ENCODE measurements at regions of chr4 and their contacts with region 1.

Region 1: GRCh38 chr4:150023489-150023888 is 54.8 kb upstream of the DCLK2 start:
- DNase-seq: no peak
- H3K4me3 ChIP-seq: no peak overlapping the region
- H3K27ac ChIP-seq: no peak overlapping the region
- H3K4me1 ChIP-seq: no peaks in the 10 kb centered on the region
- H3K27me3 ChIP-seq: no peaks in the 10 kb centered on the region
- CTCF ChIP-seq: no peak

Region 2: DNA sequence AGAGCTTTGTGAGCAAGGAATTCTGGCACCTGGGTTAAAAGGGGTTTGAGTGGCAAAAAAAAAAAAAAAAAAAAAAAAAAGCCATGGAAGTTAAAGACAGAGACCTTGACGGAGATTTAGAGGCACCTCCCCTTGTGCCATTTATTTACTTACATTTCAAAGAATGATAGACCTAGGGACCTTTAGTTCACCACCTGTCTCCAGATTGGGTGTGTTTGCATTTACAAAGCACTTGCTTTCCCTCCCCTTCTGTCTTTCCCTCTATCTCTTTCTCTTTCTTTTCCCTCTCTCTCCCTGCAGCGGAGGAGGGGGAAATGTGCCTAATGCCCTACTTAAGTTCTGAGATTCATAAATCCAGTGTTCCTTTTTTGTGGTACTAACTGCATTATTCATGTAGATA is 323.8 kb before region 1 on chr4:
- CTCF ChIA-PET with region 1: interaction called, 12 read pairs
- POLR2A ChIA-PET with region 1: no interaction called
- intact Hi-C with region 1: no loop called
- DNase-seq: no peak
- H3K4me3 ChIP-seq: no peak overlapping the region
- H3K27ac ChIP-seq: no peak overlapping the region
- H3K4me1 ChIP-seq: no peaks in the 10 kb centered on the region
- H3K27me3 ChIP-seq: no peaks in the 10 kb centered on the region
- CTCF ChIP-seq: no peak

Region 3: GRCh38 chr4:149923736-149924135 is 99.8 kb before region 1 on chr4:
- CTCF ChIA-PET with region 1: no interaction called
- POLR2A ChIA-PET with region 1: no interaction called
- intact Hi-C with region 1: no loop called
- DNase-seq: no peak
- H3K4me3 ChIP-seq: no peak overlapping the region
- H3K27ac ChIP-seq: no peak overlapping the region
- H3K4me1 ChIP-seq: no peaks in the 10 kb centered on the region
- H3K27me3 ChIP-seq: no peaks in the 10 kb centered on the region
- CTCF ChIP-seq: no peak

Measured in PC-9 (cell line).